Heart right ventricle (tissue), 16 donors: ENCODE measurements at regions of chr18 and their contacts with region 1.

Region 1: GRCh38 chr18:3983351-3983969 is 471.6 kb downstream of the DLGAP1 start:
- DNase-seq: no peak
- ATAC-seq: no peak
- H3K4me3 ChIP-seq: no peak overlapping the region
- H3K27ac ChIP-seq: no peak overlapping the region
- H3K4me1 ChIP-seq: peaks cover 0 to 10% (median 4%) of the 10 kb centered on the region in 9 donors
- H3K27me3 ChIP-seq: no peaks in the 10 kb centered on the region
- CTCF ChIP-seq: no peak

Region 2: GRCh38 chr18:3794537-3795348 is 188.7 kb before region 1 on chr18:
- intact Hi-C with region 1: loop called in 1 of 10 experiments (anchors 10 kb)
- DNase-seq: peak in 1 of 2 donors; percentile 39
- ATAC-seq: peak; percentile 29 to 91 (median 70)
- H3K4me3 ChIP-seq: no peak overlapping the region
- H3K27ac ChIP-seq: no peak overlapping the region
- H3K4me1 ChIP-seq: peaks cover 0 to 13% (median 0%) of the 10 kb centered on the region in 9 donors
- H3K27me3 ChIP-seq: no peaks in the 10 kb centered on the region
- CTCF ChIP-seq: no peak

Region 3: DNA sequence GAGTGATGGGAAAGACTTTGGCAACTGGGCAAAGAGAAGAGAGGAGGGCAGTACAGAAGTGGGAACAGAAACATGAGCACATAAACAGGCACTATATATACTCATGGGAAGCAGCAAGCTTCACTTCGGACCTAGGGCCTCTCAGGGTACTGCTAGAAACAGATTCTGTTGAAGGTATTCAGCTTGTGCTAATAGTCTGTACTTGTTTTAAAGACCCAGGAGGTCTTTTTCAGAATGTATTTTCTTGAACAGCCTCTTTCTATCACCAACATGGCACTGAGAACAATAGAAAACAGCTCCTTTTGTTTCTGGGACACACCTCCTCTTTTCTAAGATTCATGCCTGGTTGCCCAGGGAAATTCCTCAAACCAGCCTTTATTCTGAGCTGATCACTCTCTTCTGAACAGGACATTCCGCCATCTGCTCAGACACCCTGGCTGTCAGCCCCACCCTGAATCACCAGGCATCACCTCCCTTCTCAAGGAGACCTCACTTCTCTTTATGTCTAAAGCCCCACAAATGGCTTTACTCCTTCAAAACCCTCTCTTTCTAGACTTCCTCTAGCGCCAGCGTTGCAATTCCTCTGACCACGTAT is 143.9 kb before region 1 on chr18:
- intact Hi-C with region 1: loop called in 1 of 10 experiments (anchors 10 kb)
- DNase-seq: no peak
- ATAC-seq: no peak
- H3K4me3 ChIP-seq: no peak overlapping the region
- H3K27ac ChIP-seq: no peak overlapping the region
- H3K4me1 ChIP-seq: no peaks in the 10 kb centered on the region
- H3K27me3 ChIP-seq: no peaks in the 10 kb centered on the region
- CTCF ChIP-seq: no peak

Region 4: DNA sequence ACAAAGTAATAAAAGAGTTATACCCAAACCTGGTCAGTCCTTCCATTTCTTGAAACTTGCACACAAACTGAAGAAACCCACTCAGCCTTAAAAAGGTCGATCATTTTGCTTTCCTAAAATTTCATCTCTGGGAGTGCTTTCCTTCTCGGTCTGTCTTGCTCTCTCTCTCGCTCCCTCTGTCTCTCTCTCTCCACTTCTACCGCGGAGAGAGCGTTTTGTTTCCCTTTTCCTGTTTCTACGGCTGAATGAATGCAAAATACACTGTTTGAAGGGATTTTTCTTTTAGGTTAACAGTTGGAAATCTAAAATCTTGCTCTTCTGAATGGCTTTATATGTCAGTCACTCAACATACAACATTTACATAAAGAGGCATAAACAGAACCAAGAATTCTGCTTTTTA is 109.3 kb before region 1 on chr18:
- intact Hi-C with region 1: no loop called
- DNase-seq: no peak
- ATAC-seq: peak in 1 of 8 donors; percentile 62
- H3K4me3 ChIP-seq: peak overlapping the region in 4 of 10 donors; percentile 13 to 37 (median 24)
- H3K27ac ChIP-seq: peak overlapping the region in 2 of 10 donors; percentile 5 to 41
- H3K4me1 ChIP-seq: peaks cover 0 to 25% (median 0%) of the 10 kb centered on the region in 9 donors
- H3K27me3 ChIP-seq: no peaks in the 10 kb centered on the region
- CTCF ChIP-seq: no peak

Region 5: GRCh38 chr18:3923750-3924149 is 59.7 kb before region 1 on chr18:
- intact Hi-C with region 1: loop called in 1 of 10 experiments (anchors 10 kb)
- DNase-seq: no peak
- ATAC-seq: no peak
- H3K4me3 ChIP-seq: no peak overlapping the region
- H3K27ac ChIP-seq: no peak overlapping the region
- H3K4me1 ChIP-seq: peaks cover 0 to 43% (median 10%) of the 10 kb centered on the region in 9 donors
- H3K27me3 ChIP-seq: no peaks in the 10 kb centered on the region
- CTCF ChIP-seq: no peak